H1 (cell line): ENCODE measurements at regions of chr12 and their contacts with region 1.

Region 1: DNA sequence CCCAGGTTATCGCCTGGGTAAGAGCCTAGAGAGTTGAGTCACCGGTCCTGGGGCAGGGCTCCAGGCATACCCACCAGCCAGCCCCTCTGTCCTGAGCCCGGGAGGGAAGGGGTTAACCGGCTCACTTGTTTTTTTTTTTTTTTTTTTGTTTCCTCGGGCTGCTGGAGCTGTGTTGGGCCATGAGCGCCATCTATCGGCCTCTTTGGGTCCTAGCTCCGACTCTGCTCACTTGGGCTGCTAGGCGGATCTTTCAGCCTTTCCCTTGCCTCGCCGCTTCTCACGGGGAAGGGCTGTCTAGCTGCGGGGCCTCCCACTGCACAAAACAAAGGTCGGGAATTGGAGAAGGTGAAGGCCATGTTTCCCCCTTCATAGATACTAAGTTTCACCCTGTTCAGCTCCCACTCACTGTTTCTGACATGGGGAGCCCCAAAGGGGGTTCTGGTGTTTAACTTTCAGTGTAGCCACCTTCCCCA is 2.8 kb upstream of the SMUG1 start:
- DNase-seq: peak; percentile 62 to 85
- H3K4me3 ChIP-seq: no peak overlapping the region
- H3K27ac ChIP-seq: no peak overlapping the region
- H3K4me1 ChIP-seq: no peaks in the 10 kb centered on the region; a peak in 2 of 7 replicates
- H3K27me3 ChIP-seq: peaks cover 6 to 50% (median 30%) of the 10 kb centered on the region in 4 experiments
- CTCF ChIP-seq: peak; percentile 73 to 93 (median 86)
- EP300 ChIP-seq: no peak
- POLR2A ChIP-seq: no peak
- RAD21 ChIP-seq: peak; percentile 92 to 96

Region 2: DNA sequence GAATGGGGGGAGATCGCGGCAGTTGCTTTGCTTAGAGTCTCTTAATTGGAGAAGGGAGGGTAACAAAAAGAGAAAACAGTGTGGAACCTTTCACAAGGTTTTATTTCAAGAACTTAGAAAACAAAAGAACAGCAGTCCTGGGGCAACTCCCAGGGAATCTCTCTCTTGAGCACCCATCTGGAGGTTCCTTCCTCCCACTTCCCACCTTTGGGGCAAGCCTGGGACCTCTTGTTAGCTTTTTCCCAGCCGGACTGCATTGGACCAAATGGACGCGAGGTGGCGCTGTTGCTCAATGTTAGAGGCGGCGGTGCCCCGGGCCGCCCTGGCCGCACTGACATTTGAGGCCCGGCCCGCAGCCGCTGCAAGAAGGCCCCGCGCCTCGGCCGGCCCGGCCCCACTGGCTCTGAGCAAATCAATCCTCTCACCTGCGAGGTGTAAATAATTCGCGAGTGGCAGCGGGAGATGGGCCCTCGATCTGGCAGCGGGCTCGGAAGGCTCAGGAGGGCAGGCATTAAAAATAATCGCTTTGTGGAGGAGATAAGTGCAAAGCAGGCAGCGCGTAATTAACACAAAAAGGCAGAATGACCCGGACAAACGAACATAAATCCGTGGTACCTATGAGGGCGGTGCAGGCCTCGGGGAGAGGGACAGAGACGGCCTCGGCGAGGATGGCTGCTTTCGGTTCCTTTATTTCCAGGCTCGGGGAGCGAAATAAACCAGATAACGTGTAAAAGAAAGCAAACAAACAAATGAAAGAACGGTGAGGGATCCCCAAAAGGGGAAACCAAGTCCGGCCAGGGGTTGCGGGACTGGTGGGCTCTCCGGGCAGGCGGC is 185.5 kb before region 1 on chr12:
- CTCF ChIA-PET with region 1: interaction called, 46 read pairs
- POLR2A ChIA-PET with region 1: no interaction called
- DNase-seq: peak; percentile 50 to 98
- H3K4me3 ChIP-seq: no peak overlapping the region
- H3K27ac ChIP-seq: no peak overlapping the region
- H3K4me1 ChIP-seq: peaks cover 0 to 4% (median 0%) of the 10 kb centered on the region in 4 experiments; a peak in 2 of 7 replicates
- H3K27me3 ChIP-seq: peaks cover 97 to 100% (median 100%) of the 10 kb centered on the region in 4 experiments
- CTCF ChIP-seq: peak; percentile 88 to 97 (median 89)
- EP300 ChIP-seq: no peak
- POLR2A ChIP-seq: no peak
- RAD21 ChIP-seq: peak; percentile 98

Region 3: DNA sequence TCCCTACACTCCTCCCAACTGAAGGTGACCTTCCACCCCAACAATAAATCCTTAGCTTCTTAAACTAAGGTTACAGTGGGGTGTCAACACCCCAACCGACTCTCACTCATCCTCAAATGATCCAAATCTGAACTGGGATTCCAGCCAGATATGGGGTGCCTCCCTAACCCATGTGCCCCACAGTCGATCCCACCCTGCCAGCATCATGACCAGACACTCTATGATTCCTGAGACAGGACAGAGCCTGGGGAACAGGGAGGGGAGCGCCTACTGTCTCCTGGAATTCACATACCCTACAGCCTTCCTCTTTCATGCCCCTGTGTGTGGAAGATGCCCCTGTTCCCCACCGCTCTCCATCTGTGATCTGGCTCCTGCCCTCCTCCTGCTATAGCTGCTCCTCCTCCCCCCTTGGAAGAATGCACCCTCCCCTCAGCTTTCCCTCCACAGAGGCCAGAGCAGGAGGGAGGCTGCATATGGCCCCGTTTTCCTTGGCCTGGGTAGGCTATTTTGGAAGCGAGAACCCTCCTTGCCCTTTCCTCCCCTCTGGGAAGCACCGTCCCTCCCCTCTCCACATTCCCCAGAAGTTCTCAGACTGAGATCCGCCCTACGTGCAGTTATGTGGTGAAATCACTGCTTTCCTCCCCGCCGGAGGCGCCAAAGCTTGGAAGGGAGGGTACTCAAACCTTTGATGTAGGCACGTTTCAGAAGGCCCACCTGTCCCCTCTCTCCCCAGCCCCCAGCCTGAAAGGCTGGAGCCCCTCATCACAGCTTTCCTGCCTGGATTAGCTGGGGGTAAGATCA is 50.8 kb before region 1 on chr12:
- CTCF ChIA-PET with region 1: interaction called, 185 read pairs
- POLR2A ChIA-PET with region 1: interaction called, 5 read pairs
- DNase-seq: no peak
- H3K4me3 ChIP-seq: no peak overlapping the region
- H3K27ac ChIP-seq: no peak overlapping the region
- H3K4me1 ChIP-seq: peaks cover 0 to 9% (median 2%) of the 10 kb centered on the region in 4 experiments; a peak in 3 of 7 replicates
- H3K27me3 ChIP-seq: peaks cover under 1 to 57% (median 26%) of the 10 kb centered on the region in 4 experiments
- CTCF ChIP-seq: no peak
- EP300 ChIP-seq: no peak
- POLR2A ChIP-seq: no peak
- RAD21 ChIP-seq: no peak

Region 4: DNA sequence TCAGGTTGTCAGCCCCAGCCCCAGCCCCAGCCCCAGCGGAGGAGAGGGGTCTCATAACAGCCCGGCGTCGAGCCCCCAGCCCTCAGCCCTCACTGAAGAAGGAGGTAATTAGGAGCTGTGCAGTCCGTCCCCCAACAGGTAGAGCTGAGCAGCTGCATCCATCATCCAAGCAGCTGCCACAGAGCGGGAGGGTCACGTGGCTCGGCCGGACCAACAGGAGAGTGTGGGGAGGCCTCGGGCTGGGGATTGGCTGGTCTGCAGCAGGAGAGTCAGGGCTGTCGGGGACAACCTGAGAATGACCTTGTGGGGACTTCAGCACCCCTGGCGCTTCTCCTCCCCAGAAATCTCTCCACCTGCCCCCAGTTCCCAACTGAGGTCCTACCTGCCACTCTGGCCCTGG is 32.4 kb before region 1 on chr12:
- CTCF ChIA-PET with region 1: interaction called, 31 read pairs
- POLR2A ChIA-PET with region 1: interaction called, 5 read pairs
- DNase-seq: peak; percentile 61 to 88
- H3K4me3 ChIP-seq: peak overlapping the region in 1 of 4 experiments; percentile 26; a peak in 1 of 8 replicates
- H3K27ac ChIP-seq: no peak overlapping the region
- H3K4me1 ChIP-seq: peaks cover 0 to 19% (median 13%) of the 10 kb centered on the region in 4 experiments; a peak in 6 of 7 replicates
- H3K27me3 ChIP-seq: peaks cover 0 to 16% (median 8%) of the 10 kb centered on the region in 4 experiments; a peak in 5 of 7 replicates
- CTCF ChIP-seq: peak; percentile 33 to 62 (median 57); a peak in 3 of 4 replicates
- EP300 ChIP-seq: no peak
- POLR2A ChIP-seq: no peak
- RAD21 ChIP-seq: peak; percentile 5 to 29; a peak in 2 of 4 replicates

Region 5: DNA sequence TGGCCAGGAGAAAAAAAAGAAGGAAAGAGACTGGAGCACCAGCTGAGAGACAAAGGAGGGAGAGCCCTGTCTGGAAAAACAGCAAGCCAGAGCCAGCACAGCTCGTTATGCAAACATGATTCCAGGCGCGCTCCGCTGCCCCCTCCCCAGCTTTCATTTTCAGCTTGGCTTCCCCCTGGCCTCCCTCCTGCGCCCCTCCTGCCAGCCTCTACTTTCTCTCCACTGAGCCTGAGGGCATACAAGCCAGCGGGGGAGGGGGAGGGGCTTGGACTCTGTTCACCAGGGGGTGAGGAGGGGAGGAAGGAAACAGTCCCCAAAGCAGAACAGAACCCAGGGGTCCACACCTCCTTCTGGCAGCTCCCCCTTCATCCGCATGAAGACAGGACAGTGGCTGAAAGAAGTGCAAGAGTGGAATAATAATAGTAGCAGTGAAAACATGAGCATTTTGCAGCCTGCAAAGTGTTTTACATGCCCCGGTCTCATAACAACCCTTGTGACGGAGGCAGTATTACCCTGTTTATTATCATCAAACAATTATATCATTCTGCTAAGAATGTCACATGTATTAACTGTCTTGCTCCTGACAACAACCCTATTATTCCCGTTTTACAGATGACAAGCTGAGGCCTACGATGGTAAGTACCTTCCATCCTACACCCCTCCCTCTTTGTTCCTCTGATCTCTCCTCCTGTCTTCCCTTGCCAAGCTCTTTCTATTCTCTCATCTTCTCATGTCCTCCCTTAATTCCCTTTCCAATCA is 27.0 kb before region 1 on chr12:
- CTCF ChIA-PET with region 1: interaction called, 31 read pairs
- POLR2A ChIA-PET with region 1: interaction called, 5 read pairs
- DNase-seq: peak in 1 of 2 experiments; percentile 61
- H3K4me3 ChIP-seq: peak overlapping the region in 1 of 4 experiments; percentile 35; a peak in 3 of 8 replicates
- H3K27ac ChIP-seq: no peak overlapping the region
- H3K4me1 ChIP-seq: peaks cover 0 to 17% (median 12%) of the 10 kb centered on the region in 4 experiments; a peak in 6 of 7 replicates
- H3K27me3 ChIP-seq: peaks cover 0 to 9% (median 5%) of the 10 kb centered on the region in 4 experiments; a peak in 5 of 7 replicates
- CTCF ChIP-seq: no peak
- EP300 ChIP-seq: no peak
- POLR2A ChIP-seq: no peak
- RAD21 ChIP-seq: no peak

Region 6: GRCh38 chr12:54173066-54173726 is 18.4 kb before region 1 on chr12:
- CTCF ChIA-PET with region 1: interaction called, 16 read pairs
- POLR2A ChIA-PET with region 1: interaction called, 4 read pairs
- DNase-seq: peak in 1 of 2 experiments; percentile 66
- H3K4me3 ChIP-seq: peak overlapping the region; percentile 34 to 58 (median 42); a peak in 5 of 8 replicates
- H3K27ac ChIP-seq: no peak overlapping the region
- H3K4me1 ChIP-seq: peaks cover 0 to 8% (median 3%) of the 10 kb centered on the region in 4 experiments; a peak in 4 of 7 replicates
- H3K27me3 ChIP-seq: peaks cover 42 to 57% (median 51%) of the 10 kb centered on the region in 4 experiments
- CTCF ChIP-seq: no peak
- EP300 ChIP-seq: no peak
- POLR2A ChIP-seq: no peak
- RAD21 ChIP-seq: no peak